Uterus (tissue), 4 donors: ENCODE measurements at regions of chr7 and their contacts with region 1.

Region 1: DNA sequence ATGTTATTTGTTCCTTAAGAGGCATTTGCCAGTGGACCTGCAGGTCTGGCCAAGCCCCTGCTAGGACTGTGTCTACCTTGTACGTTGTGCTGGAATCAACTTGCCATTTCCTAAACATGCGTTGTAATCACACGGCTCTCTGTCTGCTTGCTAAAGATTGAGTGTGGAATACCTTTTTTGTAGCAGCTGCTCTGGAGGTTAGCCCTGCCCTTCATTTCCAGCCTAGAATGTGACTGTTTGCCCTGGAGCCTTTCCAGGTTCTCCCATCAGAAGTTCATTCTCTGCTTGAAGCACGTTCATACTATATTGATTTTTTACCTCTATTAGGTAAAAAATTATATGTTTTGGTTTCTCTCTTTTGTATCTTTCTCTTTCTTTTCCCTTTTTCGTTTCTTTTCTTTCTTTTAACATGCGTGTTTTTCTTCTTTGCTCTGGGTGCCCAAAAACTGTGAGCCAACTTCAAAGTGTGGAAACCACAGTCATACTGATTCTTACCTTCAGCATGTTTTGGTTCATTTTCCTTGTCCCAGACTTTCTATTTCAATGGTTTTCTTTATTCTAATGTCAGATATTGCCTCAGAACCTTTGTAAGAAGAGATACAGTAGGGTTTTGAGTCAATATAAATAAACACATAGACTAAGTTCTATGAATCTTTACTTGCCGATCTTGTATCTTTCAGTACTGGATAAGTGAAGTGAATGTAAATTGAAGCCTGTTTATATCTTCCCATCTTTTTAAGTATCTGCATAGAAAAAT is 111.9 kb upstream of the RPA3 start:
- DNase-seq: no peak
- H3K4me3 ChIP-seq: no peak overlapping the region
- H3K27ac ChIP-seq: no peak overlapping the region
- H3K4me1 ChIP-seq: no peaks in the 10 kb centered on the region
- H3K27me3 ChIP-seq: no peaks in the 10 kb centered on the region
- CTCF ChIP-seq: no peak
- POLR2A ChIP-seq: no peak

Region 2: DNA sequence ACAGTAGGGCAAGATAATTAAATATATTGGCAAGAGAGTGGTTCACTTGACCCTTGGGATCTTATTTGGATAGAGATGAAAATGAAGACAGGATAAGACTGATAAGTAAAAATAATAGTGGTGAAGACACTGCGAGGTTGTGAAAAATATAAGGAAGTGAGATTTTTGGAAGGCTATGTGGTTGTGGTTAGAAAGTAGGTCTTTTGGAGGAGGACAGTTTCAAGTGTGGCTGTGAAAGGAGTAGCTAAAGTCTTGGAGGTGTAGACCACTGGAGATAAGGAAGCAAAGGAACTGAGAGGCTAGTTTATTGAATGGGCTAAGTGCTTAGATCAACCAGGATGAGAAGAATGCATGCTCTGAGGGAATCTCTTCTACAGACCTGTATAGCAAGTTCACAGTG is 252.4 kb before region 1 on chr7:
- intact Hi-C with region 1: loop called (anchors 5 kb)
- DNase-seq: no peak
- H3K4me3 ChIP-seq: no peak overlapping the region
- H3K27ac ChIP-seq: no peak overlapping the region
- H3K4me1 ChIP-seq: no peaks in the 10 kb centered on the region
- H3K27me3 ChIP-seq: no peaks in the 10 kb centered on the region
- CTCF ChIP-seq: no peak
- POLR2A ChIP-seq: no peak